Activated B cell treated with CpG ODN at 0.5 μM for 24 hours (primary cell): ENCODE measurements at regions of chr6 and their contacts with region 1.

Region 1: DNA sequence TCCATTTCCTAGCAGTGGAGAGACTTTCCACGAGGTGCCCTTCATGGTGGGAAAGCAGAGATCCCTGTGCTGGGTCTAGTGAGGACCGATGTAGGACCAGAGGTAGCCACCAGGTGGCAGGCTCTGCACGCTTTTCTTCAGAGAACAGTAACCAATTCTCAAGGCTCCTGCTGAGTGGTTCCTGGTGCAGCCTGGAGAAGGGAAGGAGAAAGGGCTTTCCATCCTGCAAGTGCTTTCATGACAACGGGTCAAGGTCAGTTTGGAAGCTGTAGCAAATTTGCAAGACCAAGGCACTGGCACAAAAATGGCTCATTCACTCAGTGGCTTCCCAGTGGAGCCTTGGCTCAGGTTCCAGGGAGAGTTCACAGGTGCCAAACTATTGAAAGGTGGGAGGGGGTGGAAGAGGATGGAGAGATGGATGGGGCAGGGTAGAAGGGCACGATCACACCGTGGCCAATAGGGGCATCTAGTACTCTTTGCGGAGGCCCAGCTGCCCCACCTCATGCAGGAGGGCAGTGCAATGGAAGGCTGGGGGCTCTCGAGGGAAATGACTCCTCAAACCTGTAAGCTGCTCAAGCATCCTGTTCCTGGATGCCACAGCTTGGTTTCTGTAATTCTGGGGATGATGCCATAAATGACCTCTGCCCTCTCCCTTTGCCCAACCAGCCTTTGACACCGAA is 25.5 kb upstream of the KCNK16 start:
- DNase-seq: peak; percentile 46
- ATAC-seq: peak; percentile 64
- H3K4me3 Mint-ChIP-seq: no peak overlapping the region
- H3K27ac Mint-ChIP-seq: no peak overlapping the region
- H3K4me1 Mint-ChIP-seq: peaks cover 4% of the 10 kb centered on the region
- H3K27me3 Mint-ChIP-seq: peaks cover 3% of the 10 kb centered on the region
- CTCF ChIP-seq: peak; percentile 63

Region 2: DNA sequence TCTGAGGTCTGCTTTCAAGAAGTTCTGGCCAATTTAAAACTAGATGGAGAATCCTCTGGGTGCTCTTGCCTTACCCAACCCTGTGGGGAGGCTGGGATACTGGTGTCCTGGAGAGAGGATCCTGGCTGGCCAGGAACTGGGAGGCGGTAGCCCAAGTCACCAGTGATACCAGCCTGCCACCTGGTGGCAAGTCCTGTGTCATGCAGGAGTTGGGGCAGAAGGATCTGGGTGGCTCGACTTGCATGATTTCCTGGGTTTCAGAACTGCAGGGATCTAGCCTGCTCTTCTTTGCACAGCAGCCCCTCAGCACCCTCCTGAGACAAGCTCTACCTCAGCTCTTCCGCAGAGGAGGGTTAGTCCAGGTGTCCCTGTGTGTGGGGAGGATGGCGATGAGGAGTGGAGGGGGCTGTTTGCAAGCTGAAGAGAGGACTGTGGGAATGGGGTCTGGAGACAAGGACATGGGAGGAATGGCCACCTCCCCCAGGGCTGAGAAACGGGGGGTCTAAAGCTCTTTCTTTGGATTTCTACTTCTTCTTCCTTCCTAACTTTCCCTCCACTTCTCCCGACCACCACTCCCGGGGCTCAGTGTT is 38.0 kb before region 1 on chr6:
- CTCF ChIA-PET with region 1: no interaction called
- POLR2A ChIA-PET with region 1: no interaction called
- intact Hi-C with region 1: no loop called
- DNase-seq: peak; percentile 35
- ATAC-seq: peak; percentile 64
- H3K4me3 Mint-ChIP-seq: no peak overlapping the region
- H3K27ac Mint-ChIP-seq: no peak overlapping the region
- H3K4me1 Mint-ChIP-seq: peaks cover 22% of the 10 kb centered on the region
- H3K27me3 Mint-ChIP-seq: peaks cover 36% of the 10 kb centered on the region
- CTCF ChIP-seq: no peak

Region 3: DNA sequence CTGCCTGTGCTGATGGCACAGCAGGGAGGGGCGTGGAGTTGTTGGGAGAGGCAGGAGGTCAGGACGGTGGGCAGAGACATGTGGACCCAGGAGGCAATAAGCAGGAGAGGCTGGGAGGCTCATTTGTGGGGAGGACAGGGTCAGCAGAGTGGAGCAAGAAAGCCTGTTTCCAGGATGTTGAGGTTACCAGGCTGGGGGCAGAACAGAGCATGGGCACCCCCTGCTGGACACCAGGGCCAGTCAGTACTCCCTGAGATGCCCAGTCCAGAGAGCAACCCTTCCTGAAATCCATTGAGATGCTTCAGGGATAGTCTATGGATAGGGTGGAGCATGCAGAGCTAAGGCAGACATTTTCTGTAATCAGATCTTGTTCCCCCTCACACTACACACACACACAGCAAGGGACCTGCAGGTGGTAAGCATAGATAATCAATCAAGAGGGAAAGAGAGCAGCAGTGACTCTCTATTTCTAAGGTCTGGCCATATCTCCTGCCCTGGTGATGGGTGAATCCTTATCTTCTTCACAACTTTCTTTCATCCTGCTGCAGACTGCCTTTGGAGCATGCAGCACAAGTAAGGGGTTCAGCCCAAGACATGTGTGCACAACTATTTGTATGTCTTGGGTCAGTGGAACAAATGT is 544.6 kb after region 1 on chr6:
- CTCF ChIA-PET with region 1: no interaction called
- POLR2A ChIA-PET with region 1: no interaction called
- intact Hi-C with region 1: loop called (anchors 1 kb)
- DNase-seq: no peak
- ATAC-seq: no peak
- H3K4me3 Mint-ChIP-seq: no peak overlapping the region
- H3K27ac Mint-ChIP-seq: no peak overlapping the region
- H3K4me1 Mint-ChIP-seq: no peaks in the 10 kb centered on the region
- H3K27me3 Mint-ChIP-seq: peaks cover 10% of the 10 kb centered on the region
- CTCF ChIP-seq: no peak

Region 4: DNA sequence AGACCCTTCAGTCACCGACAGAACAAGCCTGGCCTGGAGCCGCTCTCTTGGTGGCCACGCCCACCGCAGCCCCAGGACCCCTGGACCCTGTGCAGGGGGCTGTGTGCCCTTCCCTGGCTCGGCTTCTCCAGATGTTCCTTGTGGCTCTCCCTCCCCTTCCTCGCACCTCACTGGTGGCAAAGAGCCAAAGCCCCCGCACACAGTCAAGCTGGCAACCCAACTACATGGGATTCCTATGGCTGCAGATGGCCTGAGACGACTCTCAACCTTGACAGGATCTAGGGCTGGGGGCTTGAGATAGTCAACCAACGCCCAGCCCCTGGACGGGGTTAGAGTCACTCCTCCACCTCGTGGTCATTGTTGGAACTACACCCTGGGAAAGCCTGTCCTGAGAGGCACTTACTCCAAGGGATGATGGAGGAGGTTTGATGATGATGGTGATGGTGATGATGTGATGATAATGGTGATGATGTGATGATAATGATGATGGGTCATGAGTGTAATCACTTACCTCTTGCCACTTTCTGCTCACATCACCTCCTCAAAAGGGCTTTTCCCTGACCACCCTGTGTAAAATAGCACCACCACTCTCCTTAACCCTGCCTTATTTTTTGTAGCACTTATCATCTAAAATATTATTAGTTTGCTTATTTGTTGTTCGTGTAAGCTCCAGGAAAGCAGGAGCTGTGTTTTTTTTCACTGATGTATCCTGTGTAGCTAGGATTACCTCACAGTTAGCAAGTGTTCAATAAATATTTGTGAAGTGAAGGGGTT is 960.7 kb after region 1 on chr6:
- CTCF ChIA-PET with region 1: no interaction called
- POLR2A ChIA-PET with region 1: no interaction called
- intact Hi-C with region 1: loop called (anchors 1 kb)
- DNase-seq: peak; percentile 19
- ATAC-seq: no peak
- H3K4me3 Mint-ChIP-seq: no peak overlapping the region
- H3K27ac Mint-ChIP-seq: no peak overlapping the region
- H3K4me1 Mint-ChIP-seq: peaks cover 2% of the 10 kb centered on the region
- H3K27me3 Mint-ChIP-seq: peaks cover 26% of the 10 kb centered on the region
- CTCF ChIP-seq: no peak

Region 5: GRCh38 chr6:41066867-41067304 is 1718.8 kb after region 1 on chr6:
- CTCF ChIA-PET with region 1: no interaction called
- POLR2A ChIA-PET with region 1: no interaction called
- intact Hi-C with region 1: loop called (anchors 2 kb)
- DNase-seq: no peak
- ATAC-seq: no peak
- H3K4me3 Mint-ChIP-seq: no peak overlapping the region
- H3K27ac Mint-ChIP-seq: peak overlapping the region; percentile 12
- H3K4me1 Mint-ChIP-seq: peaks cover 19% of the 10 kb centered on the region
- H3K27me3 Mint-ChIP-seq: no peaks in the 10 kb centered on the region
- CTCF ChIP-seq: no peak